Endothelial cell of umbilical vein (primary cell): ENCODE measurements at regions of chr3 and their contacts with region 1.

Region 1: GRCh38 chr3:113575206-113575605 is 42.9 kb downstream of the SIDT1 start:
- DNase-seq: no peak
- H3K4me3 ChIP-seq: no peak overlapping the region
- H3K27ac ChIP-seq: no peak overlapping the region
- H3K4me1 ChIP-seq: peaks cover 6% of the 10 kb centered on the region
- H3K27me3 ChIP-seq: peaks cover 0 to 16% of the 10 kb centered on the region in 2 experiments
- CTCF ChIP-seq: no peak
- POLR2A ChIP-seq: no peak

Region 2: GRCh38 chr3:113136071-113136470 is 439.1 kb before region 1 on chr3:
- CTCF ChIA-PET with region 1: interaction called, 10 read pairs
- POLR2A ChIA-PET with region 1: no interaction called
- dilution Hi-C with region 1: no loop called
- intact Hi-C with region 1: loop called (anchors 2 kb)
- DNase-seq: peak; percentile 20
- H3K4me3 ChIP-seq: no peak overlapping the region
- H3K27ac ChIP-seq: no peak overlapping the region
- H3K4me1 ChIP-seq: no peaks in the 10 kb centered on the region
- H3K27me3 ChIP-seq: no peaks in the 10 kb centered on the region
- CTCF ChIP-seq: peak; percentile 27 to 30
- POLR2A ChIP-seq: no peak

Region 3: DNA sequence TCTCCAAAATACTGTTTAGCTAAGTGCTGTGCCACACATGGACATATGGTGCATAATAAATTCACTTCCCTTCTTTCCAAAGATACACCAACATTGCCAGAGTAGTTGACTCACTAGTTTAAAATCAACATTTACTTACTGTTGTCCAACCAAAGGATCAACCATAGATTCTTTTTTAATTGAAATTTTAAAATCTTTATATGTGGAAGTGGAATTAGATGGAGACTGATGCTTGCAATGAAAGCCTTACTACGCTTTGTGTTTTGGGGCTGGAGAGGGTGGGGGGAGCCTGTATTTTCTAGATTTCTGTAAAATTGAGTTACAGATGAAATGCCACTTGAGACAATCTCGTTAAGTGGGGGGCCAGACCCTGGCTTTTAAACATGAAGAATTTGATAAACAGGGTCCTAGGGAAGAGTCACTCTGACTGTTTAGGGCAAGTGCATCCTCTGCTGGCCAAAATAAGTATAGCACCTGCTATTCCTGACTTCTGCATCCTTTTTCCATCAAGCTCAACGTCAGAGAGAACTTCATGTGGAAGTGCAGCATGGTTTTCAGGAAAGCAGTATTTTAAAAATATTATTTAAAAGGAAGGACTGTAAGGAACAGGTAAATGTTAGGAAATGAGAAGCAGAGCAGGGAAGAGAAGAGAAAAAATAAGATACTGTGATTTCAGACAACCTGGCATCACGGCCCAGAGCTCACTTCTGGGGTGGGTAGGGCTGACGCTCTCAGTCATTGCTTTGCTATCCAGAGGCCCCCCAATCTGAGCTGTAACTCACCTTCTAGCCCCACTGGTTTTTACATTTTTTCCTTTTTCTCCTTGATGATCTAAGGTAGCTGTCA is 287.2 kb before region 1 on chr3:
- CTCF ChIA-PET with region 1: interaction called, 12 read pairs
- POLR2A ChIA-PET with region 1: no interaction called
- dilution Hi-C with region 1: no loop called
- intact Hi-C with region 1: loop called (anchors 5 kb)
- DNase-seq: peak; percentile 75
- H3K4me3 ChIP-seq: no peak overlapping the region
- H3K27ac ChIP-seq: no peak overlapping the region
- H3K4me1 ChIP-seq: peaks cover 8% of the 10 kb centered on the region
- H3K27me3 ChIP-seq: no peaks in the 10 kb centered on the region
- CTCF ChIP-seq: peak; percentile 89 to 95
- POLR2A ChIP-seq: no peak

Region 4: GRCh38 chr3:113514265-113514769 is 60.9 kb before region 1 on chr3:
- CTCF ChIA-PET with region 1: interaction called, 27 read pairs
- POLR2A ChIA-PET with region 1: interaction called, 3 read pairs
- dilution Hi-C with region 1: no loop called
- intact Hi-C with region 1: no loop called
- DNase-seq: no peak
- H3K4me3 ChIP-seq: peak overlapping the region; percentile 69 to 88 (median 86)
- H3K27ac ChIP-seq: peak overlapping the region; percentile 75
- H3K4me1 ChIP-seq: peaks cover 9% of the 10 kb centered on the region
- H3K27me3 ChIP-seq: peaks cover 11 to 27% of the 10 kb centered on the region in 2 experiments
- CTCF ChIP-seq: no peak
- POLR2A ChIP-seq: no peak

Region 5: GRCh38 chr3:113626503-113627371 is 51.5 kb after region 1 on chr3:
- CTCF ChIA-PET with region 1: interaction called, 9 read pairs
- POLR2A ChIA-PET with region 1: no interaction called
- dilution Hi-C with region 1: no loop called
- intact Hi-C with region 1: loop called (anchors 1 kb)
- DNase-seq: peak; percentile 64
- H3K4me3 ChIP-seq: no peak overlapping the region
- H3K27ac ChIP-seq: no peak overlapping the region
- H3K4me1 ChIP-seq: peaks cover 4% of the 10 kb centered on the region
- H3K27me3 ChIP-seq: peaks cover 17 to 27% of the 10 kb centered on the region in 2 experiments
- CTCF ChIP-seq: peak; percentile 84 to 90
- POLR2A ChIP-seq: no peak